B cell (primary cell): ENCODE measurements at regions of chr15 and their contacts with region 1.

Region 1: GRCh38 chr15:100918034-100918689 is 995 bp upstream of the LRRK1 start:
- DNase-seq: peak; percentile 84
- ATAC-seq: peak; percentile 72
- H3K4me3 ChIP-seq: peak overlapping the region; percentile 71 to 89 (median 87)
- H3K4me3 Mint-ChIP-seq: peak overlapping the region; percentile 86
- H3K27ac ChIP-seq: no peak overlapping the region
- H3K27ac Mint-ChIP-seq: peak overlapping the region; percentile 87
- H3K4me1 ChIP-seq: peaks cover 30 to 45% of the 10 kb centered on the region in 2 donors
- H3K4me1 Mint-ChIP-seq: peaks cover 39% of the 10 kb centered on the region
- H3K27me3 ChIP-seq: no peaks in the 10 kb centered on the region
- H3K27me3 Mint-ChIP-seq: peaks cover 2% of the 10 kb centered on the region
- CTCF ChIP-seq: peak; percentile 96

Region 2: GRCh38 chr15:100627789-100628395 is 290.3 kb before region 1 on chr15:
- CTCF ChIA-PET with region 1: interaction called, 12 read pairs
- POLR2A ChIA-PET with region 1: no interaction called
- intact Hi-C with region 1: loop called (anchors 2 kb)
- DNase-seq: peak; percentile 81
- ATAC-seq: peak; percentile 71
- H3K4me3 ChIP-seq: no peak overlapping the region
- H3K4me3 Mint-ChIP-seq: no peak overlapping the region
- H3K27ac ChIP-seq: no peak overlapping the region
- H3K27ac Mint-ChIP-seq: no peak overlapping the region
- H3K4me1 ChIP-seq: no peaks in the 10 kb centered on the region
- H3K4me1 Mint-ChIP-seq: peaks cover 2% of the 10 kb centered on the region
- H3K27me3 ChIP-seq: no peaks in the 10 kb centered on the region
- H3K27me3 Mint-ChIP-seq: no peaks in the 10 kb centered on the region
- CTCF ChIP-seq: peak; percentile 96

Region 3: DNA sequence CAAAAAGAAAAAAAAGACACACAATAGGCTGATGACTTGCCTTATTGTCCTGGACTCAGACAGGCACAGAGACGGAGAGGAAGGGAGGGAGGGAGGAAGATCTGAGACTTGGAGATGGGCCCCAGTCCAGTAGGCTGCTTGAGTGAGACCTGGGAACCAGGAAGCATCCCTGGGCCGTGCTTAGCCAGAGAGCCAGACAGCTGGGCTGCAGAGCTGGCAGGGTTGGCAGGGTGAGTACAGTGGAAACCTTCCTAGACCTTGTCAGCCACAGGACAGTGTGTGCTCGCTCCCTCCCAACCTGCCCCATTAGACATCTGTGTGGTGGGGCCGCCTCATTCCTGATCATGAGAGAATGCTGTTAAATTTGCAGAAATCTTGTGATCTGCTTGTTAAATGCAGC is 146.4 kb before region 1 on chr15:
- CTCF ChIA-PET with region 1: no interaction called
- POLR2A ChIA-PET with region 1: no interaction called
- intact Hi-C with region 1: no loop called
- DNase-seq: no peak
- ATAC-seq: no peak
- H3K4me3 ChIP-seq: no peak overlapping the region
- H3K4me3 Mint-ChIP-seq: no peak overlapping the region
- H3K27ac ChIP-seq: no peak overlapping the region
- H3K27ac Mint-ChIP-seq: no peak overlapping the region
- H3K4me1 ChIP-seq: no peaks in the 10 kb centered on the region
- H3K4me1 Mint-ChIP-seq: no peaks in the 10 kb centered on the region
- H3K27me3 ChIP-seq: peaks cover 0 to 2% (median 0%) of the 10 kb centered on the region in 4 experiments
- H3K27me3 Mint-ChIP-seq: peaks cover 7% of the 10 kb centered on the region
- CTCF ChIP-seq: no peak

Region 4: GRCh38 chr15:100929641-100930042 is 11.5 kb after region 1 on chr15:
- CTCF ChIA-PET with region 1: interaction called, 41 read pairs
- POLR2A ChIA-PET with region 1: no interaction called
- intact Hi-C with region 1: loop called (anchors 1 kb)
- DNase-seq: no peak
- ATAC-seq: no peak
- H3K4me3 ChIP-seq: no peak overlapping the region
- H3K4me3 Mint-ChIP-seq: peak overlapping the region; percentile 55
- H3K27ac ChIP-seq: no peak overlapping the region
- H3K27ac Mint-ChIP-seq: peak overlapping the region; percentile 37
- H3K4me1 ChIP-seq: peaks cover 56 to 73% of the 10 kb centered on the region in 2 donors
- H3K4me1 Mint-ChIP-seq: peaks cover 74% of the 10 kb centered on the region
- H3K27me3 ChIP-seq: no peaks in the 10 kb centered on the region
- H3K27me3 Mint-ChIP-seq: no peaks in the 10 kb centered on the region
- CTCF ChIP-seq: no peak

Region 5: DNA sequence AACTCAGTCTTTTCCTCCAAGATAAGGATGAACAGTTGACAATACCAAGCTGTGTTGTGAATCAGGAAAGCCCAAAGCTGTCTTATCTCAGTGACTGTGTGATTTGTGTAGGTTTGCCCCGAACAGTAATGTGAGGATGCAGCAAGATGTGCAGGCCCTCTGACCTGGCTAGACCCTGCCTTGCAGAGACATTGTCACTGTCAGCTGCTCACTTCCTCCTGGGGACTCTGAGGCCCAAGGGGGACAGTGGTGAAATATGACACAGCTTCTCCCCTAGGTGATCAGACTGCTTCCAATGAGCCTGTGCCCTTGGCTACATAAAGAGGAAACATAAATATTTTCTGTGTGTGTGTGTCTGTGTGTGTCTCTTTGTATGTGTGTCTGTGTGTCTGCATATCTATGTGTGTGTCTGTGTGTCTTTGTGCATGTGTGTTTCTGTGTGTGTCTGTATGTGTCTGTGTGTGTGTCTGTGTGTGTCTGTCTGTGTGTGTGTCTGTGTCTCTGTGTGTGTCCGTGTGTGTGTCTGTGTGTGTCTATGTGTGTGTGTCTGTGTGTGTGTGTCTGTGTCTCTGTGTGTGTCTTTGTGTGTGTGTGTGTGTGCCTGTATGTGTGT is 22.7 kb after region 1 on chr15:
- CTCF ChIA-PET with region 1: interaction called, 25 read pairs
- POLR2A ChIA-PET with region 1: interaction called, 6 read pairs
- intact Hi-C with region 1: no loop called
- DNase-seq: peak; percentile 48
- ATAC-seq: peak; percentile 89
- H3K4me3 ChIP-seq: no peak overlapping the region
- H3K4me3 Mint-ChIP-seq: no peak overlapping the region
- H3K27ac ChIP-seq: peak overlapping the region; percentile 8 to 13
- H3K27ac Mint-ChIP-seq: no peak overlapping the region
- H3K4me1 ChIP-seq: peaks cover 22 to 39% of the 10 kb centered on the region in 2 donors
- H3K4me1 Mint-ChIP-seq: peaks cover 26% of the 10 kb centered on the region
- H3K27me3 ChIP-seq: no peaks in the 10 kb centered on the region
- H3K27me3 Mint-ChIP-seq: no peaks in the 10 kb centered on the region
- CTCF ChIP-seq: no peak

Region 6: DNA sequence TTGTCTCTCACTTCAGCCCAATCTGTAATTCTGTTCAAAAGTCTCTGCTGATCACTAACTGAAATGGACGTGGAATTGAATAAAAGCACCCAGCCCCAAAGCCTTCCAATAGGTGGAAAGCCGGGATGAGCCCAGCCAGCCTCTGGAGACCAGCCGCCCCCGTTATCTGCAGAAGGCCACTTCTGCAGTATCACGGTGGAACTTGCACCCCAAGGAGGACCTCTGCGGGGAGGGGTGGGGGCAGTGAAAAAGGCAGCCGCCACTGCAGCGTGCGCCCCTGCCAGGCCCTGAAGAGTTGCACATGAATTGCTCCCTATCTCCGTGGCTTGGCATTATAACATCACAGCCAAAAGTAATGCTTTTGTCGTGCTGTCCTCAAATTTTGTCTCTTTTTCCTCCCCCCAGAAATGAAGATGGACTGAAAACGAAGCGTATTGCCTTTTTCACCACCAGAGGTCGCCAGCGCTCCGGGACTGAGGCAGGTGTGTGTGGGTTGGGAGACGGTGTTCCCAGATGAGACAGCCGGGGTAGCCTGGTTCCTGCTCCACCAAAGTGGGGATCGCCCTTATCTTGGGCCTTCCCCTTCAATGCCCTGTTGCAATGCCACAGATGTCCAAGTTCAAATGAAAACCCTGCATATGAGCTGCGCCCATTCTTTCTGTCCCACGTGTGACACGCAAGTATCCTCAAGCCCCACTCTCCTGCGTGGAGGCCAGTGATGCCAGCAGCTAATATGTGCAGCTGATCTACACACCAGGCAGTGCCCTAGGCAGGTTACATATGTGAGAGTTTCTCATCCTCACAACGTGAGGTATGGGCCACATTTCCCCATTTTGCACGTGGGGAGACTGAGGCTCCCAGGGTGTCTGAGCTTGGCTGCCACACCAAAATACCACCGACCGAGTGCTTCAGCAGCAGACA is 97.0 kb after region 1 on chr15:
- CTCF ChIA-PET with region 1: interaction called, 807 read pairs
- POLR2A ChIA-PET with region 1: no interaction called
- intact Hi-C with region 1: no loop called
- DNase-seq: peak; percentile 73
- ATAC-seq: peak; percentile 65
- H3K4me3 ChIP-seq: no peak overlapping the region
- H3K4me3 Mint-ChIP-seq: no peak overlapping the region
- H3K27ac ChIP-seq: no peak overlapping the region
- H3K27ac Mint-ChIP-seq: no peak overlapping the region
- H3K4me1 ChIP-seq: no peaks in the 10 kb centered on the region
- H3K4me1 Mint-ChIP-seq: no peaks in the 10 kb centered on the region
- H3K27me3 ChIP-seq: no peaks in the 10 kb centered on the region
- H3K27me3 Mint-ChIP-seq: no peaks in the 10 kb centered on the region
- CTCF ChIP-seq: peak; percentile 83

Region 7: DNA sequence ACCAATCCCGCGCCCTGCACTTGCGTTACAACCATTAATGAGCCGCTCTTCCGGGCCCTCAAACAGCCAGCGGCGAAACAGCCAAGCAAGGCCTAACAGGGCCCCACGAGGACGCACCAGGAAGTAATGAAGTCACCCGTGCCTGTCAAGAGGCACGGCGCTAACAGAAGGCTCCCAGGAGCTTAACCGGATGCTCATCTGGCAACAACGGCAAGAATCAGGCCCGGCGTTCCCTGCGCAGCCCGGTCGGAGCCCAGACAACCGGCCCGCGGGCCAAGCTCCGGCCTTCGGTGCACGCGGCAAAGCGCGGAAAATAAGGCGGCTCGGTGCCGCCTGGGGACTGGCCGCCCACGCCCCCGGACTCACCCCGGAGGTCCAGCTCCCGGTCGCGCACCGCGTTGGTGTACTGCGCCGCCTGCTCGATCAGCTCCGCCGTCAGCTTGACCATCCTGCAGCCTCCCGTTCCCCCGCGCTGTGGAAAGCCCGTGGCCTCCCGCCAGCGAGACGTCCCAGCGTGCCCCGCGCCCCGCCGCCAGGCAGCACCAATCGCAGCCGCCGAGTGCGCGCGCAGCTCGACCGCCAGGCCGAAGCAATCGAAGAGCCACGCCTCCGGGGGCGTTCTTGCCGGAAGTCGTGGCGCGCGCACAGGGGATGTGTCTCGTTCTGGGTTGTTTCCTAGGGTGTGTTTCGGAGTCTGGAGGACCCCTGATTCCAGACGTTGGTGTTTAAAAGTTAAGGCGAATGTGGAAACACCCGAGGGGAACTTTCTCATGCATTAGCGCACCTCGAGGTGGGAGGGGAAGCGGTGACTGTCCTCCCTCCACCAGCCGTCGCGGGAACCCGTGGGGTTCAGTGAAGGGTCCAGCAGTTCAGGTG is 376.8 kb after region 1 on chr15 and contains the start of gene SNRPA1:
- CTCF ChIA-PET with region 1: interaction called, 3 read pairs
- POLR2A ChIA-PET with region 1: no interaction called
- intact Hi-C with region 1: loop called (anchors 5 kb)
- DNase-seq: peak; percentile 96
- ATAC-seq: peak; percentile 82
- H3K4me3 ChIP-seq: peak within 1 kb of the TSS; percentile 70 to 96 (median 93)
- H3K4me3 Mint-ChIP-seq: peak within 1 kb of the TSS; percentile 96
- H3K27ac ChIP-seq: peak within 1 kb of the TSS; percentile 91 to 93
- H3K27ac Mint-ChIP-seq: peak within 1 kb of the TSS; percentile 98
- H3K4me1 ChIP-seq: peaks cover 29 to 30% of the 10 kb centered on the region in 2 donors
- H3K4me1 Mint-ChIP-seq: peaks cover 45% of the 10 kb centered on the region
- H3K27me3 ChIP-seq: no peaks in the 10 kb centered on the region
- H3K27me3 Mint-ChIP-seq: no peaks in the 10 kb centered on the region
- CTCF ChIP-seq: no peak
- total RNA-seq, gene SNRPA1: 104 and 113 TPM in 2 replicates